Heart left ventricle (tissue), 16 donors: ENCODE measurements at regions of chr11 and their contacts with region 1.

Region 1: GRCh38 chr11:73404048-73404447 is 27.8 kb downstream of the RELT start:
- DNase-seq: peak; percentile 73 to 85 (median 79)
- ATAC-seq: peak; percentile 80 to 92 (median 88)
- H3K4me3 ChIP-seq: no peak overlapping the region
- H3K27ac ChIP-seq: peak overlapping the region in 8 of 12 donors; percentile 4 to 68 (median 24)
- H3K4me1 ChIP-seq: peaks cover 0 to 18% (median 11%) of the 10 kb centered on the region in 12 donors
- H3K27me3 ChIP-seq: no peaks in the 10 kb centered on the region
- CTCF ChIP-seq: peak; percentile 62 to 89 (median 80)
- POLR2A ChIP-seq: no peak

Region 2: GRCh38 chr11:73227588-73228211 is 176.3 kb before region 1 on chr11:
- intact Hi-C with region 1: no loop called
- DNase-seq: peak in 1 of 5 donors; percentile 3
- ATAC-seq: no peak
- H3K4me3 ChIP-seq: no peak overlapping the region
- H3K27ac ChIP-seq: no peak overlapping the region
- H3K4me1 ChIP-seq: peaks cover 0 to 46% (median 11%) of the 10 kb centered on the region in 12 donors
- H3K27me3 ChIP-seq: no peaks in the 10 kb centered on the region
- CTCF ChIP-seq: no peak
- POLR2A ChIP-seq: no peak

Region 3: DNA sequence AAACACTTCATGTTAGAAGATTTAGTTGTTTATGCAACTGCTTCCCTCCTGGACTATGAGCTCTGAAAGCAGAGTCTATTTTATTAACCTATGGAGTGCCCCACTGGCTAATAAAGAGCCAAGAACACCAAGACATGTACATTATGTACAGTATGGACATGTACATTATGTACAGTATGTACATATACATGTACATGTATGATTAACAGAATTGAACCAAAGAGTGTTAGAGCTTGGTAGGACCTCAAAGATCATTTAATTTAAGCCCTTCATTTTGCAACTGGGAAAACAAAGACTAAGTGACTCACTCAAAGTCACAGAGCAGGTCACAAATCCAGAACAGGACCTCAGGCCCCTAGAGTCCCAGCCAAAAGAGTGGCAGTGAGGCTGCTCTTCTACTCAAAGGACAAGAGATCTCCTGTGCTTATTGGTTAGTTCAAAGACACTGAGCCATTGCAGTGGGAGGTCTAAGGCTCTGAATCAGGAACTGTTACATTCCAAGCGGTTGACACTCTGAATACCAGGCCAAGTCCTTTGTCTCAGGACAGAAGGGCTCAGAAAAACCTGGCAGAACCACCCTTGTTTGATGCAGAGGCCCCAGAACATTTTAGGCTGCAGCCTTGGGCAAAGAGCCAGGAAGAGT is 90.0 kb after region 1 on chr11:
- intact Hi-C with region 1: loop called in 1 of 10 experiments (anchors 5 kb)
- DNase-seq: peak in 1 of 5 donors; percentile 35
- ATAC-seq: peak; percentile 54 to 90 (median 76)
- H3K4me3 ChIP-seq: no peak overlapping the region
- H3K27ac ChIP-seq: peak overlapping the region in 3 of 12 donors; percentile 11 to 53 (median 18)
- H3K4me1 ChIP-seq: peaks cover 0 to 34% (median 10%) of the 10 kb centered on the region in 12 donors
- H3K27me3 ChIP-seq: no peaks in the 10 kb centered on the region
- CTCF ChIP-seq: no peak
- POLR2A ChIP-seq: no peak

Region 4: DNA sequence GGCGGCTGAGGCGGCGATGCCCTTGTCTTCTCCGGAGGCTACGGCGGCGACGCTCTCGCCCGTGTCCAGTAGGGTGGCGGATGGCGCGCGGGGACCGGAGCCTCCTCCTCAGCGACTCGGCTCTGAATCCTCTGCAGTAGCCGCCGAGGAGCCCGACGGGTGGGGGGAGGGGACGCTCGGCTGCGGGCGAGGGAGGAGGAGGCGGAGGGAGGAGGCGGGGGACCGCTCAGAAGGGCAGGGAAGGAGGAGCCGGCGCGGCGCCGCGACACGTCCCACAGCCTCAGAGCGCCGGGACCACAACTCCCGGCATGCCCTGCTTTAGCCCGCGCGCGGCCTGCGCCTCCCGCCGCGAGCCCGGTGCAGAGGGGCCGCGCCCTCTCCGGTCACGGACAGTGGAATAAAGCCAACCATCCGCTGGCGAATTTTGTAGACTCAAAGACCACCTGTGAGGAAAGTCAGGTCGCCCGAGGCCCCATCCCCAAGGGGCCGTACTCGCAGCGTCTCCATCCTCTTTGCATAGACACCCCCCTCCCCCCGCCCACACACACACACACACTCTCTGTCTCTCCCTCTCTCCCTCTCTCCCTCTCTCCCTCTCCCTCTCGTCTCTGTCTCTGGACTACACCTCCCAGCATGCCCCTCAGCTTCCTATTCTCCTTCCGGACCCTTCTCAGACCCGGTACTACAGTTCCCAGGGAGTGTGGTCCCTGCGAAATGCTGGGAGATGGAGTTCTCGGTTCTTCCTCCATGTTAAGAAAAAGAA is 194.1 kb after region 1 on chr11 and contains the start of gene FAM168A:
- intact Hi-C with region 1: loop called in 5 of 10 experiments (anchors 2 to 10 kb)
- DNase-seq: peak; percentile 97 to 98 (median 98)
- ATAC-seq: peak; percentile 97 to 99 (median 98)
- H3K4me3 ChIP-seq: peak within 1 kb of the TSS; percentile 75 to 97 (median 90)
- H3K27ac ChIP-seq: peak within 1 kb of the TSS; percentile 69 to 92 (median 86)
- H3K4me1 ChIP-seq: peaks cover 0 to 28% (median 15%) of the 10 kb centered on the region in 12 donors
- H3K27me3 ChIP-seq: no peaks in the 10 kb centered on the region
- CTCF ChIP-seq: peak in 8 of 12 donors; percentile 14 to 44 (median 25)
- POLR2A ChIP-seq: peak in 1 of 2 donors; percentile 75
- total RNA-seq, gene FAM168A: 21.1 to 39.1 (median 31.2) TPM

Region 5: DNA sequence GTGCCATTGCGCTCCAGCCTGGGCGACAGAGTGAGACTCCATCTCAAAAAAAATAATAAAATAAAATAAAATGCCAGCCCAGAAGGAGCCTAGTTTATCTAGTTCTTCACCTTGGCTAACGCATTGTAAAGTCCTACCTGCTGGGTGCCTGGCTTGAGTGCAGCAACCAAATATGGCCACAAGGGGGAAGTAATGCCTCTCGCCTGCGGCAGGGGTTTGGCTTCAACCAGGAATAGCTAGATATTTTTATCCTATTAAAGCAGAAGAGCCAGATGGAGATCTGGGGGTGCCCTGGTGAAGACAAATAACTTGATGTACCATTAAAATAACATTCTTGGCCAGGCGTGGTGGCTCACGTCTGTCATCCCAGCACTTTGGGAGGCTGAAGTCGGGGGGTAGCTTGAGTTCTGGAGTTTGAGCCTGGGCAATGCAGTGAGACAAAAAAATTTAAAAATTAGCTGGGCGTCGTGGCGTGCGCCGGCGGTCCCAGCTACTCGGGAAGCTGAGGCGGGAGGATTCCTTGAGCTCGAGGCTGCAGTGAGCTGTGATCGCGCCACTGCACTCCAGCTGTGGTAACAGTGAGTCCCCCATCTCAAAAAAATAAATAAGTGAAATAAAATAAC is 221.8 kb after region 1 on chr11:
- intact Hi-C with region 1: loop called in 5 of 10 experiments (anchors 2 to 10 kb)
- DNase-seq: peak; percentile 64 to 76 (median 74)
- ATAC-seq: peak in 3 of 4 donors; percentile 82 to 87 (median 86)
- H3K4me3 ChIP-seq: peak overlapping the region in 2 of 12 donors; percentile 13 to 22
- H3K27ac ChIP-seq: no peak overlapping the region
- H3K4me1 ChIP-seq: peaks cover 0 to 37% (median 5%) of the 10 kb centered on the region in 12 donors
- H3K27me3 ChIP-seq: no peaks in the 10 kb centered on the region
- CTCF ChIP-seq: peak; percentile 83 to 96 (median 94)
- POLR2A ChIP-seq: no peak

Region 6: GRCh38 chr11:73661035-73661628 is 257.1 kb after region 1 on chr11:
- intact Hi-C with region 1: loop called (anchors 1 to 5 kb)
- DNase-seq: peak; percentile 88 to 94 (median 89)
- ATAC-seq: peak; percentile 88 to 97 (median 96)
- H3K4me3 ChIP-seq: peak overlapping the region in 10 of 12 donors; percentile 23 to 56 (median 41)
- H3K27ac ChIP-seq: no peak overlapping the region
- H3K4me1 ChIP-seq: peaks cover 0 to 43% (median 27%) of the 10 kb centered on the region in 12 donors
- H3K27me3 ChIP-seq: no peaks in the 10 kb centered on the region
- CTCF ChIP-seq: peak; percentile 93 to 99 (median 98)
- POLR2A ChIP-seq: no peak

Region 7: DNA sequence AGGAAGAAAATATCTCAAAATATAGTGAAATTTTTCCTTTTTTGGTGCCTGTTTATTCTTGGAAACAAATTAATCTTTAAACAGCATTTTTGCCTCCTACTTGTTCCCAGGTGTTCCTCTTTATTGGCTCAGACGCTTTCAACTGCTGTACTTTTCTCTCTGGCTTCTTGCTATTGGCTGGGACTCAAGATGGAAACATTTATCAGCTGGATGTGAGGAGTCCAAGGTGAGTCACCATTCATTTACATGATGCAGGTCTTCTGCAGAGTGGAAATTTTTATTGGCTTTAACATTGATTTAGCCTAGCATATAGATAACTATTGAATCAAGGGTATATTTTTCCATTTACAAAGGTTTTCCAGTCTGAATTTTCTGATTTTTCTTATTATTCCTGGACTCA is 512.4 kb after region 1 on chr11:
- intact Hi-C with region 1: no loop called
- DNase-seq: no peak
- ATAC-seq: no peak
- H3K4me3 ChIP-seq: no peak overlapping the region
- H3K27ac ChIP-seq: no peak overlapping the region
- H3K4me1 ChIP-seq: peaks cover 0 to 7% (median 0%) of the 10 kb centered on the region in 12 donors
- H3K27me3 ChIP-seq: no peaks in the 10 kb centered on the region
- CTCF ChIP-seq: no peak
- POLR2A ChIP-seq: no peak